Activated CD4-positive, alpha-beta memory T cell treated with anti-CD3 and anti-CD28 coated beads, Interleukin-2, amount 10 ng/mL, durations not matched to agents 7 days and 5 days (primary cell): ENCODE measurements at regions of chr3 and their contacts with region 1.

Region 1: DNA sequence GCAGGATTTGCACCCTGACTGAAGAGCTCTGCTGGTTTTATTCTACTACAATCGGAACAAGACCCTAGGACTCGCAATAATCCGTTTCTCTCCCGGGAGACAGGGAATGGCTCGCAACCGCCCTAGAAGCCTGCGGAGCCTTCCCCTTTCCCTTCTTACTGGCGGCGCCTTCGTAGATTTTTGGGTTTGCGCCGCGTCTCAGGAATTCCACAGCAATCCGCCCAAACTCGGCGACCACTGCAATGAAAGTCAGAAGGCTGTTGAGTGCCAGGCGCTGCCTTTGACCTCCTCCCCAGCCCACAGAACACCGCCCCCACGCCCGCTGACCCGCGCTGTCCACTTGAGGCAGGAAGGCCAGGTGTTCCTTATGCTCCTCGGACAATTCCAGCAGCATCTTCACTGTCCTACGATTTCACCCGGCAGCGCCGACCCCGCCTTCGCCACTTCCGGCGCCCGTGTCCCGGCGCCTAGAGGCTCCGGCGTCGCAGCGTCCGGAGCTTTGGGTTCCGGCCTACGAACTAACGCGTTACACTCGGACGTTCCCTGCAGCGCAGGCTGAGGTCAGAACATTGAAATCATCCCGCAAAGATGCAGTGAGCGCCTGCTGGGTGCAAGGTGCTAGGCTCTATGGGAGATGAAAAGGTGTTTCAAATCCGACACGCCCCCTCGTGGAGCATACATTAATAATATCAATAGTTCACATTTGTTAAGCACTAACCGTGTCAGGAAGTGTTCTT is at the start of gene COMMD2:
- DNase-seq: peak; percentile 82
- H3K4me3 Mint-ChIP-seq: peak within 1 kb of the TSS; percentile 95
- H3K27ac Mint-ChIP-seq: peak within 1 kb of the TSS; percentile 82
- H3K4me1 Mint-ChIP-seq: peaks cover 32% of the 10 kb centered on the region
- H3K27me3 Mint-ChIP-seq: peaks cover 5% of the 10 kb centered on the region
- total RNA-seq, gene COMMD2: 26.3 to 28.9 TPM

Region 2: DNA sequence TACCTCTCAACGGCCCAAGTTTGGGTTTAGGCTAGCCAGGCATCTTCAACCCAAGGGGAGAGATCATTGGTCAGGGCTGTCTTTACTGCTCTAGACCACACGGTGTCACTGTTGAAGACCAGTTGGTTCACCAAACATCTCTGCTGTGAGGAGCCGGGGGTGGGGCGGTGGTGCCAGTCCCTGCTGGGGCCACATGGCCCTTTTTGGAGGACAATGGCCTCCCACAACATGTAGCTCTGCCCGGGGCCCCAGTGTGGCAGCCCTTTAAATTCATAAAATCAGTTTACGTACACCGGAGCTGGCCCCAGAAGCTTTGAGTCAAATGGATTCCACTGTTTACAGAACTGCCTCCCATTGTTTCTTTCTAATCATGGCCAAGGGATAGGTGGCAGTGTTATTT is 399.7 kb before region 1 on chr3:
- CTCF ChIA-PET with region 1: no interaction called
- POLR2A ChIA-PET with region 1: no interaction called
- DNase-seq: peak; percentile 29
- H3K4me3 Mint-ChIP-seq: no peak overlapping the region
- H3K27ac Mint-ChIP-seq: no peak overlapping the region
- H3K4me1 Mint-ChIP-seq: no peaks in the 10 kb centered on the region
- H3K27me3 Mint-ChIP-seq: peaks cover 28% of the 10 kb centered on the region

Region 3: DNA sequence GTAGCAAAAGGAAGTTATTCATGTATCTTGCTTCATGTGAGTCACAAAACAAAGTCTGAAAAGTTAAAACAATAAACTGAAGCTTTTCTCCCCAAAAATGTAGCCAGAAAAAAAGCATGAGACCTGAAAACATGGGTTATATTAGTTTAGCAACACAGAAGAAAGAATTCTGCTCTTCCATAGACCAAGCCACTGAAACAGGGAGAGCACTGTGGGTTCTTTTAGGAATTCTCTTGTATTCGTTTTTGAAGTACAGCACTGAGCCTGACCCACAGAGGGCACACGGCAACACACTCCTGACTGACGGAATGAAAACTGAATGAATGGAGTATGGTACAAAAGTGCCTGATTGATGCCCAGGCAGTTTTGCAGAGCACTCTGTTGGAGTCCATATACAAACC is 211.1 kb before region 1 on chr3:
- CTCF ChIA-PET with region 1: no interaction called
- POLR2A ChIA-PET with region 1: no interaction called
- DNase-seq: no peak
- H3K4me3 Mint-ChIP-seq: no peak overlapping the region
- H3K27ac Mint-ChIP-seq: no peak overlapping the region
- H3K4me1 Mint-ChIP-seq: no peaks in the 10 kb centered on the region
- H3K27me3 Mint-ChIP-seq: peaks cover 12% of the 10 kb centered on the region

Region 4: DNA sequence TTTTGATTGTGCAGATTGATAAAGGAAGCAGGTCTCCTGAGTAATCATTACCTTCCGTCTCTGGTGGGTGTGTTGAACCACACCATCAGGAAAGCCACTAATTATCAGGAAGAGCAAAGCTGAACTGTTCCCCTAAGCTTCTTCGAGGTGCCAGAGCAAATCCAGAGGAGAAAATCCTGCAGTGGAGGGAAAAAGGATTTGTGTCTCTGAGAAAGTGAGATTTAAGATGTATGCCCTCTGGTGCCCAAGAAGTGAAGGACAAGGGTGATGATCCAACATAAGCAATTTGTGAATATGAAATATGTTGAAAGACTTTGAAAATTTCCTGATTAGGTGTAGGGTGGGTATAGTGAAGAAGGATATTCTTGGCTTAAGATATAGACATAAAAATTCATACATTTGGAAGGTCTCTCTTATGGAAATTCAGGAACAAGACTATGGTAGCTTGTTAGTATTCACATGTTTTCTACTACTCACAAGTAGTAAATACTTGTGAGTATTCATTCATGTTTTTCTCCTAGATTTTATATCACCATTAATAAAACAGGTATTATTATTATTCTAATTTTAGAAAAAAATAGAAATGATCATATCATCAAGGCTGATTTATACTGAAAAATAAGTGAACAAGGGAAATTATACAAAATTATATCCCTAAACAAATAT is 34.7 kb before region 1 on chr3:
- CTCF ChIA-PET with region 1: interaction called, 12 read pairs
- POLR2A ChIA-PET with region 1: no interaction called
- DNase-seq: peak; percentile 34
- H3K4me3 Mint-ChIP-seq: no peak overlapping the region
- H3K27ac Mint-ChIP-seq: no peak overlapping the region
- H3K4me1 Mint-ChIP-seq: peaks cover 10% of the 10 kb centered on the region
- H3K27me3 Mint-ChIP-seq: no peaks in the 10 kb centered on the region

Region 5: DNA sequence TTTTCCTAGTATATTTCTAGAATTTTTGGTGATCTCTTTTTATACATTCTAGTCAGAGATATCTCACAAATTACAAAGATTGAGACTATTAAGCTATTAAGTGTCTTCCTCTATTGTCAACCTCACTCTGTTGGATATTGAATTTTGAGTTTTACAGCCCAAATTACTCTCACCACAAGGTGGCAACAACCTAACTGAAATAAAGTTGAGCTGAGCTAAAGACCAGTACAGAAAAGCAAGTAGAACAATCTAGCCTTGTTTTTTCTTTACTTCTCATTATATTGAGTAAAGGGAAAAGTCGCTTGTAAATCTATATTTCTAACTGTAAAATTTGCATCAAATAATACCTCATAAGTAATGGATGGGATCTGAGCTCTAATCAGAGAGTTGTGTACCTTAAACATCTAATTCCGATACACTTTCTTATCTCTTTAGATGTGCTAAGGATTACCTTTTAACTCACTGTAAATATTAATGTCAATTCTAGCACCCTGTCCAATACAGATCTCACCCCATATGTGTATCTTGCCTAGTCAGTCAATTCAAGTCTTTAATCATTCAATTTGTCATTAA is 13.6 kb after region 1 on chr3:
- CTCF ChIA-PET with region 1: interaction called, 13 read pairs
- POLR2A ChIA-PET with region 1: no interaction called
- DNase-seq: no peak
- H3K4me3 Mint-ChIP-seq: no peak overlapping the region
- H3K27ac Mint-ChIP-seq: no peak overlapping the region
- H3K4me1 Mint-ChIP-seq: no peaks in the 10 kb centered on the region
- H3K27me3 Mint-ChIP-seq: peaks cover 32% of the 10 kb centered on the region

Region 6: GRCh38 chr3:149771652-149772271 is 19.5 kb after region 1 on chr3:
- CTCF ChIA-PET with region 1: interaction called, 13 read pairs
- POLR2A ChIA-PET with region 1: no interaction called
- DNase-seq: peak; percentile 28
- H3K4me3 Mint-ChIP-seq: no peak overlapping the region
- H3K27ac Mint-ChIP-seq: no peak overlapping the region
- H3K4me1 Mint-ChIP-seq: no peaks in the 10 kb centered on the region
- H3K27me3 Mint-ChIP-seq: peaks cover 17% of the 10 kb centered on the region